K562 (cell line): ENCODE measurements at regions of chr22 and their contacts with region 1.

Region 1: GRCh38 chr22:22168190-22168940 is 76.2 kb upstream of the VPREB1 start:
- DNase-seq: peak; percentile 74 to 98 (median 90)
- ATAC-seq: peak; percentile 65
- H3K4me3 ChIP-seq: peak overlapping the region; percentile 3; the same call in 1 of the 2 replicates
- H3K27ac ChIP-seq: no peak overlapping the region
- H3K4me1 ChIP-seq: peaks cover 0 to 3% of the 10 kb centered on the region in 2 experiments; a peak in 1 of 5 replicates
- H3K27me3 ChIP-seq: peaks cover 0 to 21% of the 10 kb centered on the region in 2 experiments; a peak in 2 of 5 replicates
- CTCF ChIP-seq: no peak
- EP300 ChIP-seq: no peak
- POLR2A ChIP-seq: no peak
- RAD21 ChIP-seq: no peak

Region 2: DNA sequence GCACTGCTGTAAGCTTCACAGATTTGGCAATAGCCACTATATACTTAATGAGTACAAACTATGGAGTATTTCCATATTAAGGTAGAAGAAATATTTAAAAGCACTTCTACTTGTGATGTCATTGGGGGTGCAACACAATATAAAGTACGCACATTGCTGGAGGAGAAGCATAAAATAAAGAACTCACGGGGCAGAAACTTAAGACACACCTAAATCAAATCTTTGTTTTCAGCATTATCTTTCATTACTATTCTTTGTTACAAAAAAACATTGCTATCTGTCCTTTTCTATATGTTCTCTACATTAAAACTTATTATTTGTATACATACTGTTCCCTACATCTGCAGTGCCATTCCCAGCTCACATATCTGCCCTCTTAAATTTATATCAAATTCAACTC is 17.1 kb before region 1 on chr22:
- CTCF ChIA-PET with region 1: interaction called, 5 read pairs
- POLR2A ChIA-PET with region 1: interaction called, 38 read pairs
- in situ Hi-C with region 1: no loop called
- intact Hi-C with region 1: loop called (anchors 2 kb)
- DNase-seq: no peak
- ATAC-seq: no peak
- H3K4me3 ChIP-seq: no peak overlapping the region
- H3K27ac ChIP-seq: no peak overlapping the region
- H3K4me1 ChIP-seq: no peaks in the 10 kb centered on the region
- H3K27me3 ChIP-seq: peaks cover 15 to 35% of the 10 kb centered on the region in 2 experiments
- CTCF ChIP-seq: no peak
- EP300 ChIP-seq: no peak
- POLR2A ChIP-seq: no peak
- RAD21 ChIP-seq: no peak

Region 3: GRCh38 chr22:22156716-22157347 is 11.5 kb before region 1 on chr22:
- CTCF ChIA-PET with region 1: interaction called, 5 read pairs
- POLR2A ChIA-PET with region 1: interaction called, 38 read pairs
- in situ Hi-C with region 1: no loop called
- intact Hi-C with region 1: no loop called
- DNase-seq: peak; percentile 98 to 100 (median 99)
- ATAC-seq: peak; percentile 98
- H3K4me3 ChIP-seq: no peak overlapping the region
- H3K27ac ChIP-seq: peak overlapping the region; percentile 1; the same call in 1 of the 3 replicates
- H3K4me1 ChIP-seq: peaks cover 0 to 4% of the 10 kb centered on the region in 2 experiments; a peak in 1 of 5 replicates
- H3K27me3 ChIP-seq: peaks cover 8 to 9% of the 10 kb centered on the region in 2 experiments
- CTCF ChIP-seq: peak in 1 of 3 experiments; percentile 99; a peak in 2 of 6 replicates
- EP300 ChIP-seq: peak; percentile 79
- POLR2A ChIP-seq: no peak
- RAD21 ChIP-seq: no peak

Region 4: GRCh38 chr22:22181341-22181850 is 13.0 kb after region 1 on chr22:
- CTCF ChIA-PET with region 1: interaction called, 3 read pairs
- POLR2A ChIA-PET with region 1: interaction called, 193 read pairs
- in situ Hi-C with region 1: no loop called
- intact Hi-C with region 1: no loop called
- DNase-seq: no peak
- ATAC-seq: no peak; the same call in 2 of the 3 replicates
- H3K4me3 ChIP-seq: no peak overlapping the region
- H3K27ac ChIP-seq: no peak overlapping the region
- H3K4me1 ChIP-seq: no peaks in the 10 kb centered on the region
- H3K27me3 ChIP-seq: peaks cover 58 to 63% of the 10 kb centered on the region in 2 experiments
- CTCF ChIP-seq: no peak
- EP300 ChIP-seq: no peak
- POLR2A ChIP-seq: no peak
- RAD21 ChIP-seq: no peak

Region 5: DNA sequence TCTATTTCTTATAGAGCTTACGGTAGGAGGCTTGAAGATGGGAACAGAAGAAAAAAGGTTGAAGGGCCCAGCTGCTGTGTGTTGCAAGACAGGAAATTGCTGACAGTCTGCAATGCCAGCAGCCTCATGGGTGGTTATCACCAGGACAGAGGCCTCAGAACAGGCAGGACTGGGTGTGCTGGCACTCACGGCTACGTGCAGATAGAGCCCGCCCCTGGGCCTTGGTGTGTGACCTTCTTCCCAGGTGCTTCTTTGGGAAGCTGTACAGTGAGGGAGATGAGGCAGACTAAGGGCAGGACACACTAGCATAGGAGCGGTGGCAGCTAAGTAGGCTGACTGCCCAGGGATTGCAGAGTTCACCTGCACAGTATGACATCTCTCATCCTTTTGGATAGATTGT is 378.1 kb after region 1 on chr22:
- CTCF ChIA-PET with region 1: no interaction called
- POLR2A ChIA-PET with region 1: no interaction called
- in situ Hi-C with region 1: no loop called
- intact Hi-C with region 1: no loop called
- DNase-seq: peak; percentile 56 to 72 (median 68)
- ATAC-seq: peak; percentile 44
- H3K4me3 ChIP-seq: no peak overlapping the region
- H3K27ac ChIP-seq: no peak overlapping the region; the same call in 2 of the 3 replicates
- H3K4me1 ChIP-seq: peaks cover 13 to 20% of the 10 kb centered on the region in 2 experiments
- H3K27me3 ChIP-seq: no peaks in the 10 kb centered on the region
- CTCF ChIP-seq: no peak
- EP300 ChIP-seq: no peak
- POLR2A ChIP-seq: no peak
- RAD21 ChIP-seq: no peak